CD4-positive, alpha-beta T cell (primary cell): ENCODE measurements at regions of chr5 and their contacts with region 1.

Region 1: GRCh38 chr5:55344392-55344992 is 36.7 kb downstream of the MTREX start:
- DNase-seq: peak; percentile 30 to 78 (median 52)
- ATAC-seq: peak; percentile 73
- H3K4me3 ChIP-seq: no peak overlapping the region
- H3K4me3 Mint-ChIP-seq: no peak overlapping the region
- H3K27ac ChIP-seq: no peak overlapping the region
- H3K27ac Mint-ChIP-seq: no peak overlapping the region
- H3K4me1 ChIP-seq: no peaks in the 10 kb centered on the region
- H3K4me1 Mint-ChIP-seq: peaks cover 12% of the 10 kb centered on the region
- H3K27me3 ChIP-seq: no peaks in the 10 kb centered on the region
- H3K27me3 Mint-ChIP-seq: no peaks in the 10 kb centered on the region
- CTCF ChIP-seq: peak; percentile 94

Region 2: GRCh38 chr5:55172051-55172899 is 172.2 kb before region 1 on chr5:
- CTCF ChIA-PET with region 1: no interaction called
- POLR2A ChIA-PET with region 1: no interaction called
- intact Hi-C with region 1: loop called in 1 of 2 experiments (anchors 5 kb)
- DNase-seq: peak; percentile 18 to 90 (median 47)
- ATAC-seq: peak; percentile 82
- H3K4me3 ChIP-seq: peak overlapping the region; percentile 63
- H3K4me3 Mint-ChIP-seq: peak overlapping the region; percentile 79
- H3K27ac ChIP-seq: no peak overlapping the region
- H3K27ac Mint-ChIP-seq: no peak overlapping the region
- H3K4me1 ChIP-seq: peaks cover 28% of the 10 kb centered on the region
- H3K4me1 Mint-ChIP-seq: peaks cover 43% of the 10 kb centered on the region
- H3K27me3 ChIP-seq: peaks cover 49 to 83% of the 10 kb centered on the region in 2 experiments
- H3K27me3 Mint-ChIP-seq: peaks cover 86% of the 10 kb centered on the region
- CTCF ChIP-seq: peak; percentile 90

Region 3: GRCh38 chr5:55370291-55370925 is 25.9 kb after region 1 on chr5:
- CTCF ChIA-PET with region 1: no interaction called
- POLR2A ChIA-PET with region 1: no interaction called
- intact Hi-C with region 1: no loop called
- DNase-seq: no peak
- ATAC-seq: no peak
- H3K4me3 ChIP-seq: no peak overlapping the region
- H3K4me3 Mint-ChIP-seq: no peak overlapping the region
- H3K27ac ChIP-seq: no peak overlapping the region
- H3K27ac Mint-ChIP-seq: no peak overlapping the region
- H3K4me1 ChIP-seq: no peaks in the 10 kb centered on the region
- H3K4me1 Mint-ChIP-seq: no peaks in the 10 kb centered on the region
- H3K27me3 ChIP-seq: no peaks in the 10 kb centered on the region
- H3K27me3 Mint-ChIP-seq: no peaks in the 10 kb centered on the region
- CTCF ChIP-seq: no peak

Region 4: DNA sequence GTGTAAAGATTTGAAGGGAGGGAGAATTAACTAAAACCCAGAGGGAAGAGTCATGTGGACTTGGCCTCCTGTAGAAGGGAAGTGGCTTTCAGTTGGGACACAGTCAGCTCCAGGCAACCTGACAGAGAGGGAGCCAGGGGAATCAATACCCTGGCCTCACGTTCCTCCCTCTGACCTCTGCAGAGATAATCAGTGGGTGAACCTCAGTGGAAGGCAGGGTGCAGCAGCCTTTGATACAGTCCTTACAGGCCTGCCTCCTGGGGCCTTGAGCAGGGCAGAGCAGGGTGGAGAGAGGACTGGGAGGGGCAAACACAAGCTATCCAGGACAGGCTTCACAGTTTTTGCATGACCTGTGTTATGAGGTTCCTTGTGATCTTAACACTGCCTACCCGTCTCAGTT is 1767.5 kb after region 1 on chr5:
- CTCF ChIA-PET with region 1: no interaction called
- POLR2A ChIA-PET with region 1: no interaction called
- intact Hi-C with region 1: no loop called
- DNase-seq: no peak
- ATAC-seq: no peak
- H3K4me3 ChIP-seq: no peak overlapping the region
- H3K4me3 Mint-ChIP-seq: no peak overlapping the region
- H3K27ac ChIP-seq: no peak overlapping the region
- H3K27ac Mint-ChIP-seq: no peak overlapping the region
- H3K4me1 ChIP-seq: peaks cover 5% of the 10 kb centered on the region
- H3K4me1 Mint-ChIP-seq: no peaks in the 10 kb centered on the region
- H3K27me3 ChIP-seq: no peaks in the 10 kb centered on the region
- H3K27me3 Mint-ChIP-seq: no peaks in the 10 kb centered on the region
- CTCF ChIP-seq: no peak